Naive thymus-derived CD4-positive, alpha-beta T cell (primary cell): ENCODE measurements at regions of chr11 and their contacts with region 1.

Region 1: DNA sequence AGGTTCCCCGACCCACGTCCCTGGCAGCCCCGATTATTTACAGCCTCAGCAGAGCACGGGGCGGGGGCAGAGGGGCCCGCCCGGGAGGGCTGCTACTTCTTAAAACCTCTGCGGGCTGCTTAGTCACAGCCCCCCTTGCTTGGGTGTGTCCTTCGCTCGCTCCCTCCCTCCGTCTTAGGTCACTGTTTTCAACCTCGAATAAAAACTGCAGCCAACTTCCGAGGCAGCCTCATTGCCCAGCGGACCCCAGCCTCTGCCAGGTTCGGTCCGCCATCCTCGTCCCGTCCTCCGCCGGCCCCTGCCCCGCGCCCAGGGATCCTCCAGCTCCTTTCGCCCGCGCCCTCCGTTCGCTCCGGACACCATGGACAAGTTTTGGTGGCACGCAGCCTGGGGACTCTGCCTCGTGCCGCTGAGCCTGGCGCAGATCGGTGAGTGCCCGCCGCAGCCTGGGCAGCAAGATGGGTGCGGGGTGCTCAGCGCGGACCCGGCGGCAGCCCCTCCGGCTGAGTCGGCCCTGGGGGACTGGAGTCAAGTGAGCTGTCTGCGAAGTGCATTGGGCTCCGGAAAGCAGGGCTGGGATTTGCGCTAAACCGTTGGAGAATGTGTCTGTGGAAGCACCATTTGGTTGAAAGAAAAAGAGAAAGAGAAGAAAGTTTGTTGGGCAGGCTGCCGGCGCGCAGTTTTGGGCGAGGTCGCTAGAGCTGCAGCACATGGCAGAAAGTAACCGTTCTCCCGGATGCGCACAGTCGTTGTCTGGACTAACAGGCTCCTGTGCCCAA is at the start of gene CD44:
- DNase-seq: peak; percentile 65 to 87 (median 73)
- ATAC-seq: peak; percentile 90
- H3K4me3 ChIP-seq: peak within 1 kb of the TSS; percentile 97
- H3K4me3 Mint-ChIP-seq: peak within 1 kb of the TSS; percentile 90 to 100 (median 96)
- H3K27ac ChIP-seq: peak within 1 kb of the TSS; percentile 88
- H3K27ac Mint-ChIP-seq: peak within 1 kb of the TSS; percentile 79 to 100 (median 95)
- H3K4me1 ChIP-seq: peaks cover 33 to 37% of the 10 kb centered on the region in 2 donors
- H3K4me1 Mint-ChIP-seq: peaks cover 43 to 60% (median 50%) of the 10 kb centered on the region in 7 donors
- H3K27me3 ChIP-seq: no peaks in the 10 kb centered on the region
- H3K27me3 Mint-ChIP-seq: peaks cover 0 to 8% (median 0%) of the 10 kb centered on the region in 5 donors
- total RNA-seq, gene CD44: 369 to 1,223 (median 784) TPM

Region 2: DNA sequence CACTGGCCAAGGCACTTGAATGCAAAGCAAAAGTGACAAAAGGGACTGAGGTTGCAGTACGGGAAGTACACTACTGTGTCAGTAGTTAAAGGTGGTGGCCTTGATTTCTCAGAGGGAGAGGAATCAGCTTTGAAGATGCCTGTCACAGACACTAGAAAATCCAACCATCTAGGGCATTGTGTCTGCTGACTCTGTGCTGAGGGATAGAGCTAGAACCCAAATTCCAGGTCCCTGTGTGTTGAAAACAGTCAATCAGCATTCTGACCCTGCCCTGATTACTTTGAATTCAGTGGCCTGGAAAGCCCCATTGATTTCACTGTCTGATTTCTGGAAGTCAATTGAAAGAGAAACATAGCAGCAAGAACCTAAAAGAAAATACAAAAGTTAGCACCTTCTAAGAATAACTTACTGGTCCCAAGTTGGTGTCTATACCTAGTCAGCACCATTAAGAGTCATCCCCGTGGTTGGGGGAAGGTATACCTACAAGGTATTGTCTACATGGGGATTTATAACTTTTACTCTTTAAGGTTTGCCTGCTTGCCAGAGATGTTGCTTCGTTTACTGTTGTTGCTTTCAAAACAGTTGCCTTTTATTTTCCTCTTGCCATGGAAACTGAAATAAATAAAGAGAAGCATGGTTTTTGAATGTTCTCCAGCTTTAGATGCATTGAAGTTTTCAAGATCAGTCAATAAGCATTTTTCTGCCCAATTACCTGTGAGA is 125.5 kb before region 1 on chr11:
- CTCF ChIA-PET with region 1: interaction called, 4 read pairs
- POLR2A ChIA-PET with region 1: interaction called, 5 read pairs
- intact Hi-C with region 1: loop called in 1 of 2 experiments (anchors 1 kb)
- DNase-seq: peak in 8 of 9 donors; percentile 8 to 68 (median 40)
- ATAC-seq: peak; percentile 79
- H3K4me3 ChIP-seq: no peak overlapping the region
- H3K4me3 Mint-ChIP-seq: peak overlapping the region; percentile 12 to 80 (median 49)
- H3K27ac ChIP-seq: peak overlapping the region; percentile 49
- H3K27ac Mint-ChIP-seq: peak overlapping the region; percentile 66 to 95 (median 84)
- H3K4me1 ChIP-seq: peaks cover 18 to 25% of the 10 kb centered on the region in 2 donors
- H3K4me1 Mint-ChIP-seq: peaks cover 19 to 40% (median 27%) of the 10 kb centered on the region in 7 donors
- H3K27me3 ChIP-seq: no peaks in the 10 kb centered on the region
- H3K27me3 Mint-ChIP-seq: peaks cover 0 to 40% (median 0%) of the 10 kb centered on the region in 5 donors

Region 3: GRCh38 chr11:35047179-35047578 is 92.0 kb before region 1 on chr11:
- CTCF ChIA-PET with region 1: interaction called, 7 read pairs
- POLR2A ChIA-PET with region 1: interaction called, 75 read pairs
- intact Hi-C with region 1: loop called (anchors 1 kb)
- DNase-seq: peak in 8 of 9 donors; percentile 47 to 88 (median 84)
- ATAC-seq: peak; percentile 79
- H3K4me3 ChIP-seq: no peak overlapping the region
- H3K4me3 Mint-ChIP-seq: peak overlapping the region; percentile 27 to 84 (median 71)
- H3K27ac ChIP-seq: peak overlapping the region; percentile 89
- H3K27ac Mint-ChIP-seq: peak overlapping the region; percentile 90 to 100 (median 99)
- H3K4me1 ChIP-seq: peaks cover 44 to 87% of the 10 kb centered on the region in 2 donors
- H3K4me1 Mint-ChIP-seq: peaks cover 66 to 99% (median 95%) of the 10 kb centered on the region in 7 donors
- H3K27me3 ChIP-seq: no peaks in the 10 kb centered on the region
- H3K27me3 Mint-ChIP-seq: peaks cover 0 to 7% (median 0%) of the 10 kb centered on the region in 5 donors

Region 4: DNA sequence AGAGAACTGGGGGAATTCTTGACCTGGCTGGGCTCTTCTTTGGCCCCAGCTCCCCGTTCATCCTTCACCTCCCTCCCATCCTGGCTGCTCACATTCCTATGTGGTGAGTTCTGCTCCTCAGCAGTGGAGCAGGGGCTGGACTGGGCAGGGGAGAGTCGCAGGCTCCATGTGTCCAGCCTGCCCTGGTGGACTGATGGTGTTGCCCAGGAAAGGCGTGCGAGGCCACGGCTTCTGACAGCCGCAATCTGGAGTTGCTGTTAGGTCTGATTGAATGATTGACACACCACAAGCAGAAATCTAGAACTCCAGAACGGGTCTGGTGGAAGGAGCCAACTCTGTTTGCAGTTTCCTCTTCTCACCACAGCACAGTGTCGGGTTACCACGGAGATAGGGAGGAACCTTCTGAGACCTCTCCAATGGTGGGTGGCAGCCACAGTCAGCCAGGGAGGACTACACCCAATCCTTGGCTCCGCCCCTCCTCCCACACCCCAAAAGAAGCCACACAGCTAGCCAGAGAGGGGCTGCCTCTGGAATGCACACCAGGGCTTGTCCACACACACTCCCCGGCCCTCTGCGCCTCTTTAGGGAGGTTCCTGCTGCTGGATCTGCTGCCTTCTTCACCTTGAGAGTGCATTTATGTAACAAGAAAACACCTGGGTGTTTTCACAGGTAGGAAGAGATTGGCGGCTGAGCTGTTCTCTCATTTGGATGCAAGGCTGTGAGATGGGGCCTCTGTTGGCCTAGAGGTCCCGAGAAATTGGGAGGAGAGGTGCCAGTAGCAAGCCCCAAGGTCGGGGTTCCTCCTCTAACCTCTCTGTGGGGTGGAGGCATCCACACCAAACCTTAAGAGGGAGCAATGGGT is 56.6 kb before region 1 on chr11:
- CTCF ChIA-PET with region 1: interaction called, 3 read pairs
- POLR2A ChIA-PET with region 1: interaction called, 35 read pairs
- intact Hi-C with region 1: loop called (anchors 1 kb)
- DNase-seq: peak; percentile 76 to 94 (median 92)
- ATAC-seq: peak; percentile 86
- H3K4me3 ChIP-seq: peak overlapping the region; percentile 55
- H3K4me3 Mint-ChIP-seq: peak overlapping the region; percentile 78 to 89 (median 86)
- H3K27ac ChIP-seq: peak overlapping the region; percentile 95
- H3K27ac Mint-ChIP-seq: peak overlapping the region; percentile 89 to 100 (median 99)
- H3K4me1 ChIP-seq: peaks cover 64 to 78% of the 10 kb centered on the region in 2 donors
- H3K4me1 Mint-ChIP-seq: peaks cover 61 to 100% (median 95%) of the 10 kb centered on the region in 7 donors
- H3K27me3 ChIP-seq: no peaks in the 10 kb centered on the region
- H3K27me3 Mint-ChIP-seq: no peaks in the 10 kb centered on the region

Region 5: GRCh38 chr11:35158701-35159510 is 19.8 kb after region 1 on chr11:
- CTCF ChIA-PET with region 1: interaction called, 12 read pairs
- POLR2A ChIA-PET with region 1: interaction called, 185 read pairs
- intact Hi-C with region 1: loop called (anchors 1 kb)
- DNase-seq: no peak
- ATAC-seq: no peak
- H3K4me3 ChIP-seq: peak overlapping the region; percentile 6
- H3K4me3 Mint-ChIP-seq: peak overlapping the region; percentile 48 to 94 (median 80)
- H3K27ac ChIP-seq: peak overlapping the region; percentile 94
- H3K27ac Mint-ChIP-seq: peak overlapping the region; percentile 68 to 100 (median 100)
- H3K4me1 ChIP-seq: peaks cover 97 to 98% of the 10 kb centered on the region in 2 donors
- H3K4me1 Mint-ChIP-seq: peaks cover 73 to 100% (median 99%) of the 10 kb centered on the region in 7 donors
- H3K27me3 ChIP-seq: no peaks in the 10 kb centered on the region
- H3K27me3 Mint-ChIP-seq: no peaks in the 10 kb centered on the region

Region 6: GRCh38 chr11:35237860-35238715 is 99.0 kb after region 1 on chr11:
- CTCF ChIA-PET with region 1: interaction called, 3 read pairs
- POLR2A ChIA-PET with region 1: interaction called, 6 read pairs
- intact Hi-C with region 1: loop called (anchors 2 to 5 kb)
- DNase-seq: peak in 7 of 9 donors; percentile 28 to 69 (median 47)
- ATAC-seq: peak; percentile 46
- H3K4me3 ChIP-seq: no peak overlapping the region
- H3K4me3 Mint-ChIP-seq: peak overlapping the region in 5 of 10 donors; percentile 20 to 74 (median 61)
- H3K27ac ChIP-seq: no peak overlapping the region
- H3K27ac Mint-ChIP-seq: peak overlapping the region; percentile 39 to 90 (median 73)
- H3K4me1 ChIP-seq: peaks cover 40 to 46% of the 10 kb centered on the region in 2 donors
- H3K4me1 Mint-ChIP-seq: peaks cover 51 to 94% (median 80%) of the 10 kb centered on the region in 7 donors
- H3K27me3 ChIP-seq: no peaks in the 10 kb centered on the region
- H3K27me3 Mint-ChIP-seq: peaks cover 0 to 9% (median 0%) of the 10 kb centered on the region in 5 donors